ENCODE measurements at regions of chr6 and their contacts with region 1.

Region 1: GRCh38 chr6:38671885-38672467 is 31.0 kb downstream of the GLO1 start:
- DNase-seq: peak; percentile 60
- H3K4me3 Mint-ChIP-seq: no peak overlapping the region
- H3K27ac Mint-ChIP-seq: no peak overlapping the region
- H3K4me1 Mint-ChIP-seq: no peaks in the 10 kb centered on the region
- H3K27me3 Mint-ChIP-seq: no peaks in the 10 kb centered on the region
- CTCF ChIP-seq: peak; percentile 67

Region 2: DNA sequence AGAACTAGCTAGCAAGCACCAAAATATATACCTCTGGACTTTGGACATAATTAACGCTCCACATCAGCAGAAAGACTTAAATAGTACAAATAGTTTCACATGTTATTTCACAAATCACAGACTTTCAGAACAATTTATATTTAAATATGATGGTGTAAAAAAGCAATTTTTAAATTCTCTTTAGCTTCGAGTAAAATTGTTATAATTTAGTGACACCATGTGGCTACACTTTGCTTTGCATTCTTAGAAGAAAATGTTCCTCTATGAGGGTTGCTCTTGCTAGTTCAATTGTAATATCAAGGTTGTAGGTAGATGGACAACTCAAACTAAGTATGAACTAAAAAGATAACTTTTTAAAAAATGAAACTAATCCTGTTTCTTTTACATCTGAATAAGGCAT is 101.2 kb before region 1 on chr6:
- CTCF ChIA-PET with region 1: no interaction called
- POLR2A ChIA-PET with region 1: no interaction called
- intact Hi-C with region 1: loop called (anchors 10 kb)
- DNase-seq: peak; percentile 5
- H3K4me3 Mint-ChIP-seq: no peak overlapping the region
- H3K27ac Mint-ChIP-seq: no peak overlapping the region
- H3K4me1 Mint-ChIP-seq: peaks cover 5% of the 10 kb centered on the region
- H3K27me3 Mint-ChIP-seq: no peaks in the 10 kb centered on the region
- CTCF ChIP-seq: peak; percentile 40

Region 3: DNA sequence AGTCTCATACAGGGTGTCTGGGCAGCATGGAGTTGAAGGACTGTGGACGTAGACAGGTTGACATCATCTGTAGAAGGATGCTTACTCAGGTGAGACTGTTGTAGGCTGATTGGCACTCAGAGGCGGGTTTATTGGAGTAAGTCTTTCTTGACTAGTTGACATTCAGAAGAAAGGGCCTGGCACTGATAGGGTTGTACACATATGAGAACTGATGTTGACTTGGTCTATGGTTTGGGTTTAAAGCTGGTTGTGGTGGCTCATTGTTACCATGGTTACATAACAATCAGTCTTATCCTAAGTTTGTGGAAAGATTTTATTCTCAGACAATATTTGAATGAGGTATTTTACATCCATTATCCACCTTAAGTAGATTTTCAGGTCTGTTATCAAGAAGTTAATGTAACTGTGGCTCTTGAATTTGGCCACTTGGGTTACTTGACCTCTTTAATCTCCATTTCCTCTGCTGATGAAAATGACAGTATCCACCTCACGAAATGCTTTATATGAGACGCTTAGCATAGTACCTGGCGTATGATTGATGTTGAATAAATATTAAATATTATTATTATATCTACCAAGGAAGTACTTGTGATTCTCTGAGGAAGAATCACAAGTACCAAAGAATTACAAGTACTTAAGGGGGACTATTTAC is 152.4 kb after region 1 on chr6:
- CTCF ChIA-PET with region 1: no interaction called
- POLR2A ChIA-PET with region 1: no interaction called
- intact Hi-C with region 1: no loop called
- DNase-seq: no peak
- H3K4me3 Mint-ChIP-seq: no peak overlapping the region
- H3K27ac Mint-ChIP-seq: no peak overlapping the region
- H3K4me1 Mint-ChIP-seq: no peaks in the 10 kb centered on the region
- H3K27me3 Mint-ChIP-seq: no peaks in the 10 kb centered on the region
- CTCF ChIP-seq: no peak